Activated CD4-positive, alpha-beta T cell treated with anti-CD3 and anti-CD28 coated beads for 36 hours (primary cell): ENCODE measurements at regions of chr13 and their contacts with region 1.

Region 1: DNA sequence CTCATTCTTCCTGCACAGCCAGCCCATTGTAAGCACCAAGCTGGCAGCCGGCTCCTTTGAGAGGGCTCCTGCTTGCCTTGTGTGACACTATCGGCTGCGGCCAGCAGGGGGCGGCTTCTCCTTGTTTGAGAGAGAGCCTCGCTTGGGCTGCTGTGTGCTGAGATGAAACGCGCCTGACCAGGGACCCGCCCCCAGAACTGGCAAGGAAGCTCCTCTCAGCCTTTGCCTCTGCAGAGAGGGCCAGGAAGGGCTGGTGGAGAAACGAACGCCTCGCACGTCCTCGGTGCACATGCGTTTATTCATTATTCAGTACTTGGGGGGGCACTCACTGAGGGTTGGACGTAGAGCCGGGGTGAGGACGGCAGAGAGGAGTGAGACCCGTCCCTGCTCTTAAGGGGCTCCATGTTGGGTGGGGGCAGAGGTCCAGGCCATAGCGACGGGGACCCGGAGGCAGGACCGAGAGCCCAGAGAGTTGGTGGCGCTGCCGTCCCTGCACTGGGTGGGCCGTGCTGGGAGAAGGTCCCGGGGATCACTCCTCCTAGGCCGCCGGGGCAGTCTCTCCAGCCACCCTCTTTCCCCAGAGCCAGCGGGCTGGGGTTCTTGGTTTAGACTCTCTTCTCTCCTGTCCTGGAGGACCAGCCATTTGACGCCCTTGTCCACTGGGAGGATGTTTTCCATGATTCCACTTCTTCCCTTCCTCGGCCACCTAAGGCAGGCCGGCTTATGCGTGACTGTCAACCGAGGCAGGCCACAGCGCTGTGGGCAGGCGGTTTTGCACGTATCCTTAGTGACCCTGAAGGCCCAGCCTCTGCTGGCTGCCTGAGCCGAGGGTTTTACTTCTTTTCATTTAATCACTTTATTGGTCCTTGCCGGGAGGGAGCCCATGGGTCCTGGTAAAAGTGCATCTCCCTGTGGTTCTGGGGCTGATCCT is 174.5 kb downstream of the KATNAL1 start:
- DNase-seq: peak; percentile 99
- ATAC-seq: peak; percentile 99
- H3K4me3 Mint-ChIP-seq: no peak overlapping the region
- H3K27ac Mint-ChIP-seq: peak overlapping the region; percentile 79
- H3K4me1 Mint-ChIP-seq: peaks cover 12% of the 10 kb centered on the region
- H3K27me3 Mint-ChIP-seq: no peaks in the 10 kb centered on the region

Region 2: DNA sequence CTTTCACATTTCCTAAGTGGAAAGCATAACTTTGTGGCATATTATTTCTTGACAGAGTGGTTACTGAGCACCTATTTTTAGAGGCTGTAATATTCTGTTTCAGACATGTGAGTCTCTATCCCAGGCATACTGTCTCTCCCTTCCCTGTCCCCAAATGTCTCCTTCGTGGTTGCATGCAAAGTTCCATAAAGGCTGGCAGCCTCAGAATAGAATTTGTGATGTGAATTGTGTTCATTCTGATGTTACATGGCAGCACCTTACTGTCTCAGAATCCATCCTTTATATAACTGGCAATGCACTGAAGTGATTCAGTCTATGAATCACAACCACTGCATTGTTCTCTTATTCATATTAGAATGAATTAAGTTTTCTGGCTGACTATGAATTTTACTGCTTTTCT is 448.4 kb before region 1 on chr13:
- CTCF ChIA-PET with region 1: no interaction called
- POLR2A ChIA-PET with region 1: no interaction called
- intact Hi-C with region 1: no loop called
- DNase-seq: no peak
- ATAC-seq: no peak
- H3K4me3 Mint-ChIP-seq: no peak overlapping the region
- H3K27ac Mint-ChIP-seq: no peak overlapping the region
- H3K4me1 Mint-ChIP-seq: no peaks in the 10 kb centered on the region
- H3K27me3 Mint-ChIP-seq: peaks cover 11% of the 10 kb centered on the region

Region 3: DNA sequence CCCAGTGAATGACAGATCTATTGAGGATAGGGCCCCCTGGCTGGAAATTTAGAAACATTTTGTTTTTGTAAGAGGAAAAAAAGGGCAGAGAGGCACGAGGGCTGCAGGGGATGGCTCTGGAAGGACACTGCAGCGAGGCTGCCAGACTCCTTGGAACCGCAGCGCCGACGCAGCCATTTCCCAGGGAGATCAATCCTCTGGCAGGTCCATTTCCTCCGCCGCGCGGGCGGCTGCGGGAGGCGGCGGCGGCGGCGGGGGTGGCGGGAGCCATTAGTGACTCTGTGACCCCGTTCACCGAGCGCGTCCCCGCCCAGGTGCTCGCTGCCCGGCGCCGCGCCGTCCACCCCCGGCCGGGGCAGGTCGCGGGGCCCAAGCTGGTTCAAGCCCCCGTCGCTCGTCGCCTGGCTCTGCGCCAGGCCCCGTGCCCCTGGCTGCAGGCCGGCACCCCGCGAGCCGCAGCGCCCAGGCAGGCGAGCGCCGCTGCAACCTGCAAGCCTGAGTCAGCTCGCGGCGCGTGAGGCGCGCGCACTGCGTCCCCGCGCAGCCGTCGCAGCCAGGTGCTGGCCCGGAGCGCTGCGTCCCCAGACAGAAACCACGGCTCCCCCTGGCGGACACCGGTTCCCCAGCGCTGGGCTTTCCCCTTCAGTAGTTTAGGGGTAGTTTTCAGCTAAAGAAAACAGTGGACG is 18.2 kb before region 1 on chr13:
- CTCF ChIA-PET with region 1: interaction called, 60 read pairs
- POLR2A ChIA-PET with region 1: no interaction called
- intact Hi-C with region 1: no loop called
- DNase-seq: peak; percentile 96
- ATAC-seq: peak; percentile 92
- H3K4me3 Mint-ChIP-seq: peak overlapping the region; percentile 70
- H3K27ac Mint-ChIP-seq: peak overlapping the region; percentile 68
- H3K4me1 Mint-ChIP-seq: peaks cover 33% of the 10 kb centered on the region
- H3K27me3 Mint-ChIP-seq: no peaks in the 10 kb centered on the region

Region 4: GRCh38 chr13:30158774-30159445 is 26.0 kb after region 1 on chr13:
- CTCF ChIA-PET with region 1: interaction called, 114 read pairs
- POLR2A ChIA-PET with region 1: interaction called, 3 read pairs
- intact Hi-C with region 1: loop called (anchors 1 kb)
- DNase-seq: peak; percentile 44
- ATAC-seq: peak; percentile 63
- H3K4me3 Mint-ChIP-seq: no peak overlapping the region
- H3K27ac Mint-ChIP-seq: peak overlapping the region; percentile 65
- H3K4me1 Mint-ChIP-seq: peaks cover 48% of the 10 kb centered on the region
- H3K27me3 Mint-ChIP-seq: no peaks in the 10 kb centered on the region

Region 5: DNA sequence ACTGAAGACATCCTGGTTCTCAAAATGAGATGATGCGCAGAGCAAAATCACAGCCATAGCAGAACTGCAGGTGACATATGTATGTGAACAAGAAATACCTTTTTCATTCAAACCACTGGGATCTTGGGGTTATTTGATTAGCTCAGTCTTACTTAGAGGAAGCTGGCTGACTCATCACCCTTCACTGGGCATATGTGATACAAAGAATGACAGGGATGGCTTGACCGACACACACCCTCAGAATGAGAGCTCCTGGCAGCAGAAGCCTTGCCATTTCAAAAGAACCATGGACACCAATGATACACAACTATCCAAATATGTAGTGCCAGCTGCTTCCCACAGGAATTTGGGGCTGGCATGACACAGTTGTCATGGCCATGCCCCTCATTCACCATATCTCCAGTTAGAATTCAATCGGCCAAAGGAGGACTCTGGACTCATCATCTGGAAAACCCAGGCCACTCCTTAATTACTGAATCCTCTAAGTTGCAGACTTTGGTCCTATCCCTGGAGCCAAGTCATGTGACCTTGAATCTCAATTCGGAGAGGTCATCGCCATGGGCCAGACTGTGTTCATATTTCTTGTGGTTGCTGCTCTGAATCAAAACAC is 58.7 kb after region 1 on chr13:
- CTCF ChIA-PET with region 1: interaction called, 10 read pairs
- POLR2A ChIA-PET with region 1: no interaction called
- intact Hi-C with region 1: no loop called
- DNase-seq: no peak
- ATAC-seq: no peak
- H3K4me3 Mint-ChIP-seq: no peak overlapping the region
- H3K27ac Mint-ChIP-seq: no peak overlapping the region
- H3K4me1 Mint-ChIP-seq: peaks cover 2% of the 10 kb centered on the region
- H3K27me3 Mint-ChIP-seq: no peaks in the 10 kb centered on the region

Region 6: GRCh38 chr13:30334663-30335386 is 201.9 kb after region 1 on chr13:
- CTCF ChIA-PET with region 1: interaction called, 22 read pairs
- POLR2A ChIA-PET with region 1: no interaction called
- intact Hi-C with region 1: loop called (anchors 1 to 2 kb)
- DNase-seq: peak; percentile 29
- ATAC-seq: peak; percentile 61
- H3K4me3 Mint-ChIP-seq: no peak overlapping the region
- H3K27ac Mint-ChIP-seq: no peak overlapping the region
- H3K4me1 Mint-ChIP-seq: peaks cover 15% of the 10 kb centered on the region
- H3K27me3 Mint-ChIP-seq: no peaks in the 10 kb centered on the region

Region 7: GRCh38 chr13:30551189-30551588 is 418.3 kb after region 1 on chr13:
- CTCF ChIA-PET with region 1: interaction called, 3 read pairs
- POLR2A ChIA-PET with region 1: no interaction called
- intact Hi-C with region 1: loop called in 1 of 2 experiments (anchors 1 kb)
- DNase-seq: peak; percentile 16
- ATAC-seq: peak; percentile 85
- H3K4me3 Mint-ChIP-seq: no peak overlapping the region
- H3K27ac Mint-ChIP-seq: no peak overlapping the region
- H3K4me1 Mint-ChIP-seq: peaks cover 2% of the 10 kb centered on the region
- H3K27me3 Mint-ChIP-seq: no peaks in the 10 kb centered on the region

Region 8: DNA sequence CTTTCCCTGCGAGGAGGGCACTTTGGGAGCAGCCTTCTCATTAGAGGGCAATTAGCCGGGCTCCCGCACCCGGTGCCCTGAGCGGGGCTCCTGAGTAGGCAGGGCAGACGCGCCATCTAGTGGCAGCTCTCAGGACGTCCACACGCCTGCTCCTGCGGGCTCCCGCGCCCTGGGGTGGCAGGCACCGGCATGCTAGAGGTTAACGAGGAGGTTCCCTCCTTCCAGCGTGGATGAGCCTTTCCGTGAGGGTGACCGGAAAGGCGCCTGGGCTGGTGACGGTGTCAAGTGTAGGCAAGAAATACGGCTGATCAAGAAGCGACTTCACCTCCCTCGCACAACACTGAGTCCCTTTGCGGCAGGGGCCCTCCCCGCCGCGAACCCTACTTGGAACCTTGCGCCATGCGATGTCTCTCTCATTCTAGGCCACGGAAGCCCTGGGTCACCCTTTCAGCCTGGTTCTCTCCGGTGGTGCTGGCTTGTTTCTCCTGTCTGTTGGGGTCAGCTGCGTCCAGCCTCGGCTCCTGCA is 670.1 kb after region 1 on chr13:
- CTCF ChIA-PET with region 1: interaction called, 4 read pairs
- POLR2A ChIA-PET with region 1: no interaction called
- intact Hi-C with region 1: loop called (anchors 1 kb)
- DNase-seq: peak; percentile 91
- ATAC-seq: peak; percentile 99
- H3K4me3 Mint-ChIP-seq: no peak overlapping the region
- H3K27ac Mint-ChIP-seq: no peak overlapping the region
- H3K4me1 Mint-ChIP-seq: peaks cover 4% of the 10 kb centered on the region
- H3K27me3 Mint-ChIP-seq: no peaks in the 10 kb centered on the region